ENCODE measurements at regions of chr3 and their contacts with region 1.

Region 1: DNA sequence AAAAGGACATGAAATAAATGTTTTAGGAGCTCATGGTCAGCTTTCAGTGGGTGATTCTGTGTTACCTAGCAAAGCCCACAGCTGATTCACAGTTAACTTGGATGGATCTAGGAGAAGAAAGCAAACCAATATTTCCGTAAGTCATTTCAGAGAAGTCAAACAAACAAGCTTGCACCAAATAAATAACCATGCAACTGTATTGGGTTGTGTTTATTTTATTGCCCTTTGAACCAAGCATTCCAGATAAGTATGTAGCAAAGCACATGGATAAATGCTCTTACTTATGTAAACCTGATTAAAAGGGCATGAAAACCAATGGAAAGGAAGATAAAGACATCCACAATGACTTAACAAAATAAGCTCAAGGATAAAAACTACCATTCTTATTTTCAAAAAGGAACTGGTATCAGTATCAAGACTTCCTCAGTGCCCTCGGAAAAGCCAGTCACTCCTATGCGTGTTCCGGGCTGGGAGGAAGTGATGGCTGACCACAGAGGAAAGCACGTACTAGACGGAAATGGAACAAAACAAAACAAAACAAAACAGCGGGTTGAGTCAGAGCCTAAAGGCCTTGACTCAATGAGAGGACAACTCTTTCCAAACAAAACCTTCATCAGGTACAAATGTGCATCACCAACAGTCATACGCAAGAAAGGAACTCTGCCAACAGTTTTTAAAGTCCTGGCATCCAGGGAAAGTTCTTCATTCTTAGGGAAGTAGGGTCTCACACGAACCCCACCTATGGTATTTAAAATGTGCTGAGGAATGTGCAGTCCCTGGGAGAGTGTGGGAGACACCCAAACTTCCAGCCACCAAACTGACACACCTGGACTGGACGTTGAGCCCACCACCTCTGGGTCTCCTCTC is 103.3 kb downstream of the SNRK start:
- DNase-seq: peak; percentile 72
- H3K4me3 Mint-ChIP-seq: peak overlapping the region; percentile 35
- H3K27ac Mint-ChIP-seq: peak overlapping the region; percentile 81
- H3K4me1 Mint-ChIP-seq: peaks cover 52% of the 10 kb centered on the region
- H3K27me3 Mint-ChIP-seq: peaks cover 6% of the 10 kb centered on the region

Region 2: GRCh38 chr3:42190701-42191462 is 1198.7 kb before region 1 on chr3:
- intact Hi-C with region 1: no loop called
- DNase-seq: peak; percentile 42
- H3K4me3 Mint-ChIP-seq: no peak overlapping the region
- H3K27ac Mint-ChIP-seq: no peak overlapping the region
- H3K4me1 Mint-ChIP-seq: peaks cover 30% of the 10 kb centered on the region
- H3K27me3 Mint-ChIP-seq: no peaks in the 10 kb centered on the region

Region 3: DNA sequence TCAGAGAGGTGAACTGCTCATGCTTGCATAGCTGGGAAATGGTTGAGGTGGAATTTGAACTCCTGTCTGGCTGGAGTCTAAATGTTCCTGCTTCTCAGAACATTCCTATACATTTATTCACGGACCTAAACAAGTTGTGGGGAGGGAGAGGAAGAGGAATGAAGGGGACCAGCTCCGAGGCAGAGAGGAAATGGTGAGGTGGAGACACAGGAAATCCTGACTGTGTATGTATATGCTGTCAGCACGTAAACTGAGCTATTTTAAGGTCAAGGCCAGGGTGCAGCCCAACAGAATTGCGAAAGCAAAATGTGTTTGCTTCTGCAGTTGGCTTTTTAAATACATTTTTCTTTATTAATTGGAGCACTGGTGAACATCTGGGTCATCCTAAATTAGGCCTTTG is 209.6 kb before region 1 on chr3:
- intact Hi-C with region 1: loop called (anchors 2 kb)
- DNase-seq: peak; percentile 48
- H3K4me3 Mint-ChIP-seq: peak overlapping the region; percentile 36
- H3K27ac Mint-ChIP-seq: peak overlapping the region; percentile 80
- H3K4me1 Mint-ChIP-seq: peaks cover 62% of the 10 kb centered on the region
- H3K27me3 Mint-ChIP-seq: peaks cover 4% of the 10 kb centered on the region

Region 4: GRCh38 chr3:43296565-43296964 is 93.1 kb before region 1 on chr3:
- intact Hi-C with region 1: loop called (anchors 1 kb)
- DNase-seq: peak; percentile 63
- H3K4me3 Mint-ChIP-seq: peak overlapping the region; percentile 80
- H3K27ac Mint-ChIP-seq: peak overlapping the region; percentile 87
- H3K4me1 Mint-ChIP-seq: peaks cover 82% of the 10 kb centered on the region
- H3K27me3 Mint-ChIP-seq: no peaks in the 10 kb centered on the region

Region 5: DNA sequence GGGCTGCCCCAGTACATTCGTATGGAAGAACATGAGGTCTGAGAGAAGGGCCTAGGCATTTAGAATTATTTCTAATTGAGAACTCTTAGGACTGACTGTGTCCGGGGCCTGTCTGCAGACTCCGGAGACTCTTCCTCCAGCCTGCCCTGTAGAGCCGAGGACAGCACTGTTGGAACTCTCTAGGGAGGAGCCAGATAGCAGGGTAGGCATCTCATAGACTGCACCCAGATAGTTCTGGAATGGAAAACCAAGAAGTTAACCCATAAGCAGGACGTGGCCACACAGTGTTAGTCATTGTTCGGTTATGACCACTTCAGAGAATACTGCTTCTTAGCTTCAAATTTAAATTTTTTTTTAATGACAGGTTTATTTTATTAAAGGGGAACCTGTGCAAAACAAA is 43.7 kb before region 1 on chr3:
- intact Hi-C with region 1: loop called (anchors 1 kb)
- DNase-seq: no peak
- H3K4me3 Mint-ChIP-seq: peak overlapping the region; percentile 63
- H3K27ac Mint-ChIP-seq: peak overlapping the region; percentile 86
- H3K4me1 Mint-ChIP-seq: peaks cover 80% of the 10 kb centered on the region
- H3K27me3 Mint-ChIP-seq: no peaks in the 10 kb centered on the region

Region 6: DNA sequence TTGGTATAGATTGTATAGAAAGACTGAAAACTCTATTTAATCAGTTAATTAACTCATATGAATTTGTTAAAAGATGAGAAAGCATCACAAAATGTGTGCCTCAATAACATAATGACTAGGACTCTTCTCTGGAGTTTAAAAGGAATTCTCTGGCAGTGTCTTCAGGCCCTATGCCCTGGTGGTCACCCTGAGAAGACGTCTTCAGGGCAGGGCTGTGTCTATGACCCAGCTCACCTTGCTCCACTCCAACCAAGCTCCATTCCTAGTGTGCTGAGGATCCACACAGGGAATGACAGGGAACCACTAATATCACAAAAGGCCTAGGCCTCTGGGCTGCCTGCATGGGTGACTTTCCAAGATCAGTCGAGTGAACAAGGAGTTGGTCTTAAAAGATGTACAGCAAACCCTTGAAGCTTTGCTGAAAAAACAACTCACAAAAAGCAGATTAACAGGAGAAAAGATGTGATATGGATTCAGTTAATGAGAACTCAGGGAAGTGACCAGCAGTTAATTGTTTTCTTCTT is 53.3 kb after region 1 on chr3:
- intact Hi-C with region 1: no loop called
- DNase-seq: no peak
- H3K4me3 Mint-ChIP-seq: no peak overlapping the region
- H3K27ac Mint-ChIP-seq: no peak overlapping the region
- H3K4me1 Mint-ChIP-seq: peaks cover 4% of the 10 kb centered on the region
- H3K27me3 Mint-ChIP-seq: no peaks in the 10 kb centered on the region

Region 7: GRCh38 chr3:44439499-44440295 is 1050.1 kb after region 1 on chr3:
- intact Hi-C with region 1: loop called (anchors 5 kb)
- DNase-seq: peak; percentile 69
- H3K4me3 Mint-ChIP-seq: peak overlapping the region; percentile 65
- H3K27ac Mint-ChIP-seq: peak overlapping the region; percentile 84
- H3K4me1 Mint-ChIP-seq: peaks cover 46% of the 10 kb centered on the region
- H3K27me3 Mint-ChIP-seq: no peaks in the 10 kb centered on the region